B cell (primary cell): ENCODE measurements at regions of chr7 and their contacts with region 1.

Region 1: DNA sequence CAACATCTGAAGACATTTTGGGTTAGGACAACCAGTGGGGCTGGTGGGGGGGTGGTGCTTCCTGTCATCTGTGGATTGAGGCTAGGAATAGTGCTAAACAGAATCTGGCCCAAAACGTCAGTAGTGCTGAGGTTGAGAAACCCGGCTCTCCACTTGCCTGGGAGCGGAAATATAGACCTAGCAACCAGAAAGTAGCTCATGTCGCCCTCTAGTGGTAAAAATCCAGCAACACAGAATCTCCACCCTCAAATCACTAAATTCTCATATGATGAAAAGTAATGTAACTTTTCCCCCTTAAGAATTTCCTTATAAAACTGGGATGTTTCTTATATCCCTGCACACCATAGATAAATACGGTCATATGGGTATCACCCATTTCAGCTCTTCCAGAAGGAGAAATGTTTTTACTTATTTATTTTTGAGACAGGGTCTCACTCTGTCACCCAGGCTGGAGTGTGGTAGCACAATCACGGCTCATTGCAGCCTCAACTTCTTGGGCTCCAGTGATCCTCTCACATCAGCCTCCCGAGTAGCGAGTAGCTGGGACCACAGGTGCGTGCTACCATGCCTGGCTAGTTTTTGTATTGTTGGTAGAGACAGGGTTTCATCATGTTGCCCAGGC is 34.4 kb downstream of the ZC3HAV1 start:
- DNase-seq: peak; percentile 84
- ATAC-seq: peak; percentile 86
- H3K4me3 ChIP-seq: no peak overlapping the region
- H3K4me3 Mint-ChIP-seq: no peak overlapping the region
- H3K27ac ChIP-seq: peak overlapping the region; percentile 15 to 85
- H3K27ac Mint-ChIP-seq: peak overlapping the region; percentile 15
- H3K4me1 ChIP-seq: peaks cover 4 to 7% of the 10 kb centered on the region in 2 donors
- H3K4me1 Mint-ChIP-seq: peaks cover 17% of the 10 kb centered on the region
- H3K27me3 ChIP-seq: no peaks in the 10 kb centered on the region
- H3K27me3 Mint-ChIP-seq: no peaks in the 10 kb centered on the region
- CTCF ChIP-seq: peak; percentile 82

Region 2: GRCh38 chr7:139016931-139017511 is 58.1 kb before region 1 on chr7:
- CTCF ChIA-PET with region 1: interaction called, 16 read pairs
- POLR2A ChIA-PET with region 1: no interaction called
- intact Hi-C with region 1: loop called (anchors 1 kb)
- DNase-seq: peak; percentile 66
- ATAC-seq: peak; percentile 78
- H3K4me3 ChIP-seq: no peak overlapping the region
- H3K4me3 Mint-ChIP-seq: no peak overlapping the region
- H3K27ac ChIP-seq: no peak overlapping the region
- H3K27ac Mint-ChIP-seq: no peak overlapping the region
- H3K4me1 ChIP-seq: peaks cover 0 to 3% of the 10 kb centered on the region in 2 donors
- H3K4me1 Mint-ChIP-seq: peaks cover 4% of the 10 kb centered on the region
- H3K27me3 ChIP-seq: peaks cover 0 to 2% (median 0%) of the 10 kb centered on the region in 4 experiments
- H3K27me3 Mint-ChIP-seq: peaks cover 20% of the 10 kb centered on the region
- CTCF ChIP-seq: peak; percentile 66

Region 3: DNA sequence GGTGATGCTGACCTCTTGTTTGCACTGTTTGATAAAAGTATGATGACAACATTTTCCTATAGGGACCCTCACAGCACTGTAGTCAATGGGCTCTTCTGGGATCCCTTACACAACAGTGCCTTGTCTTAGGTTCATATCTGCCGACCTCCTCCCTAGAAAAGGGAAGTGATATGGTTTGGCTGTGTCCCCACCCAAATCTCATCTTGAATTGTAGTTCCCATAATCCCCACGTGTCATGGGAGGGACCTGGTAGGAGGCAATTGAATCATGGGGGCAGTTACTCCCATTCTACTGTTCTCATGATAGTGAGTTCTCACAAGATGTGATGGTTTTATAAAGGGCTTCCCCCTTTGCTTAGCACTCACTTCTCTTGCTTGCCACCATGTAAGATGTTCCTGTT is 11.3 kb after region 1 on chr7:
- CTCF ChIA-PET with region 1: interaction called, 40 read pairs
- POLR2A ChIA-PET with region 1: no interaction called
- intact Hi-C with region 1: no loop called
- DNase-seq: no peak
- ATAC-seq: no peak
- H3K4me3 ChIP-seq: no peak overlapping the region
- H3K4me3 Mint-ChIP-seq: no peak overlapping the region
- H3K27ac ChIP-seq: peak overlapping the region in 1 of 2 donors; percentile 37
- H3K27ac Mint-ChIP-seq: peak overlapping the region; percentile 38
- H3K4me1 ChIP-seq: peaks cover 0 to 5% of the 10 kb centered on the region in 2 donors
- H3K4me1 Mint-ChIP-seq: peaks cover 39% of the 10 kb centered on the region
- H3K27me3 ChIP-seq: no peaks in the 10 kb centered on the region
- H3K27me3 Mint-ChIP-seq: no peaks in the 10 kb centered on the region
- CTCF ChIP-seq: no peak

Region 4: GRCh38 chr7:139104091-139104450 is 28.9 kb after region 1 on chr7:
- CTCF ChIA-PET with region 1: interaction called, 14 read pairs
- POLR2A ChIA-PET with region 1: no interaction called
- intact Hi-C with region 1: loop called (anchors 1 kb)
- DNase-seq: peak; percentile 49
- ATAC-seq: no peak
- H3K4me3 ChIP-seq: peak overlapping the region; percentile 45 to 95 (median 74)
- H3K4me3 Mint-ChIP-seq: peak overlapping the region; percentile 89
- H3K27ac ChIP-seq: peak overlapping the region; percentile 61 to 96
- H3K27ac Mint-ChIP-seq: peak overlapping the region; percentile 87
- H3K4me1 ChIP-seq: peaks cover 33 to 40% of the 10 kb centered on the region in 2 donors
- H3K4me1 Mint-ChIP-seq: peaks cover 49% of the 10 kb centered on the region
- H3K27me3 ChIP-seq: no peaks in the 10 kb centered on the region
- H3K27me3 Mint-ChIP-seq: no peaks in the 10 kb centered on the region
- CTCF ChIP-seq: no peak

Region 5: DNA sequence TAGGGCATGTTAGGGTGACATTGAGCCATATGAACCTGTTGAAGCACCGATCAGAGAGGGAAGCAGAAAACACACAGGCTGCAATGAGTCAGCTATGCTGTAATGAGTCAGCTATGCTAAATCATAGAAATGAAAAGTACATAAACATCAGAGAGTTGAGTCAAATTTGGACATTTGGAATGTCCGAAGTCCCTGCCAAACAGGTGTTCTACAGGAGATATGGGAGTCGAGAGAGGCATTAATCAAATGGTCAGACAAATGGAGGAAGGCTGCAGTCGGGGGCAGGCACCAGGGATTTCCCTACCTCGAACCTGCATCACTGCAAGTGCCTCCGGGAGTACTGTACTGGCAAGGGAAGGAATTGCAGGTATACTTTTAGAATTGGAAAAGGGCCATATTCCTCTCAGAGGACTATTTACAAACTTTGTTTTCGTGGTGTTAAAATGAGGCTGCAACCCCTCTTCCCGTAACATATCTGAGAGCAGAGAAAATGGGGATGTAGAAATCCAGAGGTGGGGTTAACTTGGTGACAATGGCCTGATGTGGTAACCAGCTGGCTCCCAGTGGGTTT is 43.2 kb after region 1 on chr7:
- CTCF ChIA-PET with region 1: interaction called, 10 read pairs
- POLR2A ChIA-PET with region 1: no interaction called
- intact Hi-C with region 1: no loop called
- DNase-seq: no peak
- ATAC-seq: no peak
- H3K4me3 ChIP-seq: peak overlapping the region in 2 of 5 experiments; percentile 27 to 45
- H3K4me3 Mint-ChIP-seq: peak overlapping the region; percentile 85
- H3K27ac ChIP-seq: peak overlapping the region; percentile 91
- H3K27ac Mint-ChIP-seq: peak overlapping the region; percentile 97
- H3K4me1 ChIP-seq: peaks cover 20% of the 10 kb centered on the region in 2 donors
- H3K4me1 Mint-ChIP-seq: peaks cover 25% of the 10 kb centered on the region
- H3K27me3 ChIP-seq: no peaks in the 10 kb centered on the region
- H3K27me3 Mint-ChIP-seq: no peaks in the 10 kb centered on the region
- CTCF ChIP-seq: no peak

Region 6: GRCh38 chr7:139133335-139134139 is 58.4 kb after region 1 on chr7:
- CTCF ChIA-PET with region 1: interaction called, 38 read pairs
- POLR2A ChIA-PET with region 1: no interaction called
- intact Hi-C with region 1: no loop called
- DNase-seq: peak; percentile 90
- ATAC-seq: peak; percentile 96
- H3K4me3 ChIP-seq: peak overlapping the region; percentile 46 to 63 (median 58)
- H3K4me3 Mint-ChIP-seq: peak overlapping the region; percentile 93
- H3K27ac ChIP-seq: peak overlapping the region; percentile 18 to 69
- H3K27ac Mint-ChIP-seq: peak overlapping the region; percentile 88
- H3K4me1 ChIP-seq: peaks cover 9 to 13% of the 10 kb centered on the region in 2 donors
- H3K4me1 Mint-ChIP-seq: peaks cover 18% of the 10 kb centered on the region
- H3K27me3 ChIP-seq: no peaks in the 10 kb centered on the region
- H3K27me3 Mint-ChIP-seq: no peaks in the 10 kb centered on the region
- CTCF ChIP-seq: no peak